ENCODE measurements at regions of chr20 and their contacts with region 1.

Region 1: GRCh38 chr20:34774886-34775285 is 50.6 kb downstream of the NCOA6 start:
- DNase-seq: no peak
- ATAC-seq: no peak
- H3K4me3 ChIP-seq: no peak overlapping the region
- H3K27ac ChIP-seq: no peak overlapping the region
- H3K4me1 ChIP-seq: no peaks in the 10 kb centered on the region
- H3K27me3 ChIP-seq: no peaks in the 10 kb centered on the region
- CTCF ChIP-seq: no peak

Region 2: DNA sequence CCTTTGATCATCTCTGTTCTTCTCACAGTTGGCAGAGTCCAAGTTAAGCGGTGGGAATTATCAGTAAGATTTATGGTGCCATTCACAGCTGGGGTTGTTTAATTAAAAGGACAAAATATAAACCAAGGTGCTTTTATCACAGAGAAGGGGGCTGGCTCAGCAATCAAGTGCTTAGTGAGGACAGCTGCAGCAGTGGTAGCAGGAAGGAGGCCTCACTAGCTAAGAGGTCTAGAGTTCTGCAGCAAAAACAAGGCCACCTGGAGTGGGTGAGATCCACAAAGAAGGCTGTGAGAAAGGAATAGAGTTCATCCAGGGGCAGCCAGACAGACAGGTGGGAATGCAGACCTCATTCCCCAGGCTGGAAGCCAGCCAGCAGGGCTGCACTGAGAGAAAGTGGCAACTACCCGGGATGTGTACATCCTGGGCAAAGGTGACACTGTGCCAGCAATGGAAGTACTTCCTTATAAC is 135.1 kb before region 1 on chr20:
- CTCF ChIA-PET with region 1: no interaction called
- POLR2A ChIA-PET with region 1: no interaction called
- in situ Hi-C with region 1: no loop called
- intact Hi-C with region 1: no loop called
- DNase-seq: no peak
- ATAC-seq: no peak
- H3K4me3 ChIP-seq: no peak overlapping the region
- H3K27ac ChIP-seq: no peak overlapping the region
- H3K4me1 ChIP-seq: no peaks in the 10 kb centered on the region
- H3K27me3 ChIP-seq: no peaks in the 10 kb centered on the region
- CTCF ChIP-seq: no peak

Region 3: DNA sequence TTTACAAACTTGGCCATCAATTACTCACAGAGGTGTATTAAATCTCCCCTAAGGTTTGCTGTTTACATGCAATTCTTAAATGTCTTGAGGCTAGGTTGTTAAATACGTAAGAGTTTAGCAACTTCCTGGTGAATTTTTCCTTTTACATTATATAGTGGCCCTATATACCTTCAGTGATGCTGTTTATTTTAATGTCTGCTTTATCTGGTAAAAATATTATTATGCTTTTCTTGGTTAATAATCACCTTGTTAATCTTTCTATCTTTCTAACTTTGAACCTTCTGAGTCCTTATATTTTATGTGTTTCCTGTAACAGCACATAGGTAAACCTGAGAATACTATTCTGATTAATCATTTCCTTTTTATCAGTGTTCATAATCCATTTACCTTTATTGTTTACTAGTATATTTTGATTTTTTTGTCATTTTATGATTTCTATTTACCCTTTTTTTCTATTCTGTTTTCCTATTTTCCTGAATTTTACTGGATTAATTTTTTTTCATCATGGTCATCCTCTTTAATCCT is 12.8 kb before region 1 on chr20:
- CTCF ChIA-PET with region 1: interaction called, 4 read pairs
- POLR2A ChIA-PET with region 1: interaction called, 14 read pairs
- in situ Hi-C with region 1: no loop called
- intact Hi-C with region 1: no loop called
- DNase-seq: no peak
- ATAC-seq: no peak
- H3K4me3 ChIP-seq: no peak overlapping the region
- H3K27ac ChIP-seq: no peak overlapping the region
- H3K4me1 ChIP-seq: no peaks in the 10 kb centered on the region; the same call in 1 of the 2 replicates
- H3K27me3 ChIP-seq: no peaks in the 10 kb centered on the region
- CTCF ChIP-seq: no peak